Activated T-helper 1 cell treated with anti-CD3 and anti-CD28 coated beads, Interleukin-12 subunit alpha, Interleukin-12 subunit beta, Interleukin-2, Interleukin-4 antibody, amounts not matched to agents 30 ng/mL and 10 ng/mL and 1 ng/mL, durations not matched to agents 14 hours and 24 hours and 36 hours (primary cell): ENCODE measurements at regions of chr2 and their contacts with region 1.

Region 1: DNA sequence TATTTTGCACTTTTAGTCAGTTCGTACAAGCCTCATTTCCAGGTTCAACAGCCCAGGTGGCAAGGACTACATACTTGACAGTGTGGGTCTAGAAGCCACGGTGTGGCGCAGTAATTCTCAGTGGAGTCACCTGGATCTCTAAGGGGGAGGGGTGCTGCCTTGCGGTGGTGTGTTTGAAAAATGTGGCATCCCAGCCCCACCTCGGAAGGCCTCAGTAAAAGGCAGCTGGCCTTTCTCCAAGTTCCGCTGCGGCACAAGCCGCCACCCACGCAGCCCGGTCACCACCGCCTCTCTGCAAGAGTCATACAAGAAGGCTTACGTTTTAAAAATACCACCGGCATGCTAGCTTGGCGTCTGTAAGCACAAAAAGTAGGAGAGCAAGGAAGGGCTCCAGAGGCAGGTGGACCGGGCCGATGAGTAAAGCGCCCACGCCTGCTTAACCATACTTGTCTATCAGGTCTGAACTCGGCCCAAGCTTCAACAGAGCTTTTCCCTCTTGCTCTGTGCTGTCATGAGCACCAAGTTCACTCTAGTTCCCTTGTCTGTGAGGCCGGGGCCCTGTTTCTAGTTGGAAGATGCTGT is 49.5 kb downstream of the SPRED2 start:
- DNase-seq: peak; percentile 63
- H3K4me3 Mint-ChIP-seq: peak overlapping the region; percentile 56
- H3K27ac Mint-ChIP-seq: peak overlapping the region; percentile 62
- H3K4me1 Mint-ChIP-seq: peaks cover 67% of the 10 kb centered on the region
- H3K27me3 Mint-ChIP-seq: peaks cover 7% of the 10 kb centered on the region

Region 2: DNA sequence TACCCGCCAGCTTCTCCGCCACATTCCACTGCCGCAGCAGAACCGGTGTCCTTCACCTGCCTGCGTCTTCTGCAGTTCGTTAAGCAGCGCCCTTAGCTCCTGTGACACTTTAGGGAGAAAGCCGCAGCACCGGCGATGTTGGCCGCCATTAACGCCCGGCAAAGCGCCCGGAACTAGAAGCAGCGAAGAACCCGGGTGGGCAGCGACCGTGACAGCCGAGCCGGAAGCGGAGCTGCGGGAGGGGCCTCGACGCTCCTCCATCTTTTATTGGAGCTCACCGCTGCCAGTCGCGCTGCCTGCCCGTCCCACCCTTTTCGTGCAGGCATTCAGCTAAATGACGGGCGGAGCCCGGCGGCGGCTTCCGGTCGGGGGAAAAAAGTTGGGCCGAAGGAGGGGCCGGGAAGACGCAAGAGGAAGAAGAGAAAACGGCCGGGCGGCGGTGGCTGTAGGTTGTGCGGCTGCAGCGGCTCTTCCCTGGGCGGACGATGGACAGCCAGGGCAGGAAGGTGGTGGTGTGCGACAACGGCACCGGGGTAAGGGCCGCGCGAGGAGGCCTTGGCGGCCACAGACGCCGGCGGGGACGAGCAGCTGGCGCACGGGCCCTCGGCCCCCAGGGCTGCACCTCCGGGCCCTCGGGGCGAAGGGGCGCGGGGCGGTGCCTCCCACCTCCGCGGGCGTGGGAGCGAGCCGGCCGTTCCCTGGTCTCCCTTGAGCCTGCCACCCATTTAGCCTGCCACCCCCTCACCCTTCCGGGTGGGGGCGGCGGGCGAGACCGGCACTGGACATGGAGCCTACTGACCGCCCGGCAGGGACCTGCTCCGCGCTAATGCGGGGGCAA is 155.2 kb before region 1 on chr2 and contains the start of gene ACTR2:
- intact Hi-C with region 1: loop called (anchors 5 kb)
- DNase-seq: peak; percentile 95
- H3K4me3 Mint-ChIP-seq: peak within 1 kb of the TSS; percentile 98
- H3K27ac Mint-ChIP-seq: peak within 1 kb of the TSS; percentile 99
- H3K4me1 Mint-ChIP-seq: peaks cover 36% of the 10 kb centered on the region
- H3K27me3 Mint-ChIP-seq: no peaks in the 10 kb centered on the region
- total RNA-seq, gene ACTR2: 285 and 295 TPM in 2 replicates

Region 3: DNA sequence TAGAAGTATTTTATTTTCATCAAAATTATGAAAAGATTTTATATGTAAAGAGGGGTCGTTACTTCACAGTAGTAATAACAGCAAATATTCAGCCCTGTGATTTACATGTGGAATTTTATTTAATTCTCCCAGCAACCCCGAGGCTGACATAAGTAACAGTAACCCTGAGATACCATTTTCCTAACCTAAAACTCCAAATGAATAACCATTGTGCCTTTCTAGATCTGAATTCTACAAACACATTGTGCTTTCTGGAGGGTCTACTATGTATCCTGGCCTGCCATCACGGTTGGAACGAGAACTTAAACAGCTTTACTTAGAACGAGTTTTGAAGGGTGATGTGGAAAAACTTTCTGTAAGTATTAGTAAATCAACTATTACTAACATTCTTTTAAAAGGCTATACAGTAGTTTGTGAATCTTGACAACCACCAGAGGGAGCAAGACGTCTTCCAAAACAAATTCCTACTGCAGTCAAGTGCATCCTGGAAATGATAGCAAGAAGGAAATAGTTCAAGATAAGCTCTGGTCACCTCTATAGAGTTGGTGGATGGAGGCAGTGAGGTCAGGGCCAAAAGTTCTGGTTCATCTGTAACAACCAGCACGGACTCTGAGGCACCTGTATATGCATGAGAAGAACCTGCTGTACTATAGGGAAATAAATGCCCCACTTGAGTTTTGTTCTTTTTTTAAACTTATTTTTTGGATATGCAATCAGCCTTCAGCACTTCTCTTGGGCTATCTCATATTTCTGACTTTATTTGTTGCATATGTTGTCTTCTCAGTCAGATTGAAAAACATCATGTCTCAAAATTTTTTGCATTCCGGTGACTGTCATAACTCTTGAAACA is 117.8 kb before region 1 on chr2:
- intact Hi-C with region 1: loop called (anchors 1 kb)
- DNase-seq: no peak
- H3K4me3 Mint-ChIP-seq: no peak overlapping the region
- H3K27ac Mint-ChIP-seq: no peak overlapping the region
- H3K4me1 Mint-ChIP-seq: peaks cover 17% of the 10 kb centered on the region
- H3K27me3 Mint-ChIP-seq: no peaks in the 10 kb centered on the region

Region 4: GRCh38 chr2:65350684-65351083 is 32.2 kb before region 1 on chr2:
- intact Hi-C with region 1: no loop called
- DNase-seq: no peak
- H3K4me3 Mint-ChIP-seq: no peak overlapping the region
- H3K27ac Mint-ChIP-seq: no peak overlapping the region
- H3K4me1 Mint-ChIP-seq: peaks cover 34% of the 10 kb centered on the region
- H3K27me3 Mint-ChIP-seq: peaks cover 2% of the 10 kb centered on the region

Region 5: GRCh38 chr2:65416945-65417344 is 34.1 kb after region 1 on chr2:
- intact Hi-C with region 1: loop called (anchors 1 kb)
- DNase-seq: no peak
- H3K4me3 Mint-ChIP-seq: no peak overlapping the region
- H3K27ac Mint-ChIP-seq: peak overlapping the region; percentile 65
- H3K4me1 Mint-ChIP-seq: peaks cover 36% of the 10 kb centered on the region
- H3K27me3 Mint-ChIP-seq: peaks cover 6% of the 10 kb centered on the region

Region 6: GRCh38 chr2:65554765-65555591 is 172.1 kb after region 1 on chr2:
- intact Hi-C with region 1: loop called (anchors 2 kb)
- DNase-seq: no peak
- H3K4me3 Mint-ChIP-seq: peak overlapping the region; percentile 6
- H3K27ac Mint-ChIP-seq: peak overlapping the region; percentile 38
- H3K4me1 Mint-ChIP-seq: peaks cover 16% of the 10 kb centered on the region
- H3K27me3 Mint-ChIP-seq: peaks cover 30% of the 10 kb centered on the region